ENCODE measurements at regions of chr12 and their contacts with region 1.

Region 1: DNA sequence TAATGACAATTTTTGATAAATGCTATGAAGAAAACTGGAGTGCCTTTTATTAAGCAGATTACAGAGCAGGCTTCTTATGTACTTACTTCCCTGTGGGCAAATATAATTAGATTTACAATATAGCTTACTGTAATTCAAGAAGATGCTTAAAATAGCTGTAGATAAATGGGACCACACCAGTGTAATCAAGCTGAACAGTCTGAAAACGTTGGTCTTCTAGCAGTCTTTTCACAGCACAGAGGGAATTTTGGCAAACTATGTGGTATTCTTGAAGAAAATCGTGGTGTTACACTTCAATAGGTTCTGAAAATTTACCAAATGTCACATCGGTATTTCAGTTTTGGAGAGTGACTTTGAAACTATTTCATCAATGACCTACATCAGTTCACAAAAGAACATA is 47.7 kb downstream of the SLC16A7 start:
- DNase-seq: no peak
- ATAC-seq: no peak
- H3K4me3 ChIP-seq: no peak overlapping the region
- H3K4me3 Mint-ChIP-seq: no peak overlapping the region
- H3K27ac ChIP-seq: no peak overlapping the region
- H3K27ac Mint-ChIP-seq: no peak overlapping the region
- H3K4me1 ChIP-seq: no peaks in the 10 kb centered on the region
- H3K4me1 Mint-ChIP-seq: peaks cover 0 to 56% (median 37%) of the 10 kb centered on the region in 7 donors
- H3K27me3 ChIP-seq: no peaks in the 10 kb centered on the region
- H3K27me3 Mint-ChIP-seq: no peaks in the 10 kb centered on the region

Region 2: GRCh38 chr12:59626377-59626776 is 17.2 kb before region 1 on chr12:
- CTCF ChIA-PET with region 1: no interaction called
- POLR2A ChIA-PET with region 1: interaction called, 3 read pairs
- intact Hi-C with region 1: loop called in 1 of 2 experiments (anchors 2 kb)
- DNase-seq: no peak
- ATAC-seq: no peak
- H3K4me3 ChIP-seq: no peak overlapping the region
- H3K4me3 Mint-ChIP-seq: no peak overlapping the region
- H3K27ac ChIP-seq: no peak overlapping the region
- H3K27ac Mint-ChIP-seq: no peak overlapping the region
- H3K4me1 ChIP-seq: peaks cover 0 to 5% of the 10 kb centered on the region in 2 donors
- H3K4me1 Mint-ChIP-seq: peaks cover 2 to 80% (median 74%) of the 10 kb centered on the region in 7 donors
- H3K27me3 ChIP-seq: no peaks in the 10 kb centered on the region
- H3K27me3 Mint-ChIP-seq: no peaks in the 10 kb centered on the region

Region 3: DNA sequence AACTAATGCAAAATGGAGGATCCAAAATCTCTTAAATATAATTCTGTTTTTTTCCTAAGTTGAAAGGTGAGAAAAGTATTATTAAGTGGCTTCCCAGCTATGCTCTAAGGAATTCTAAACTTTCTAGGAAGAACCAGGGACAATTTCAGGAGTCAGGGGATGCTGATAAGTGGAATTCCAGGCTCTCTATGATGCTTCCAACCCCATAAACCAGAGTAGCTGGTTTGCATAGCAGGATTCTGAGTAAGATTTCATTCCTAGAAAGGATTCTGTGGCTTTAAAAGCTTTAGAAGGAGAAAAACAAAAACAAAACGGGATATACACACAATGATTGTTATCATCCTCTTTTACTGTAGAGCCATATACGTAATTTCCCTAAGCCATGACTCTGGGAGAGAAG is 46.2 kb after region 1 on chr12:
- CTCF ChIA-PET with region 1: no interaction called
- POLR2A ChIA-PET with region 1: no interaction called
- intact Hi-C with region 1: no loop called
- DNase-seq: no peak
- ATAC-seq: no peak
- H3K4me3 ChIP-seq: no peak overlapping the region
- H3K4me3 Mint-ChIP-seq: no peak overlapping the region
- H3K27ac ChIP-seq: no peak overlapping the region
- H3K27ac Mint-ChIP-seq: no peak overlapping the region
- H3K4me1 ChIP-seq: no peaks in the 10 kb centered on the region
- H3K4me1 Mint-ChIP-seq: peaks cover 0 to 42% (median 23%) of the 10 kb centered on the region in 7 donors
- H3K27me3 ChIP-seq: no peaks in the 10 kb centered on the region
- H3K27me3 Mint-ChIP-seq: no peaks in the 10 kb centered on the region